PC-3 (cell line): ENCODE measurements at regions of chr11 and their contacts with region 1.

Region 1: DNA sequence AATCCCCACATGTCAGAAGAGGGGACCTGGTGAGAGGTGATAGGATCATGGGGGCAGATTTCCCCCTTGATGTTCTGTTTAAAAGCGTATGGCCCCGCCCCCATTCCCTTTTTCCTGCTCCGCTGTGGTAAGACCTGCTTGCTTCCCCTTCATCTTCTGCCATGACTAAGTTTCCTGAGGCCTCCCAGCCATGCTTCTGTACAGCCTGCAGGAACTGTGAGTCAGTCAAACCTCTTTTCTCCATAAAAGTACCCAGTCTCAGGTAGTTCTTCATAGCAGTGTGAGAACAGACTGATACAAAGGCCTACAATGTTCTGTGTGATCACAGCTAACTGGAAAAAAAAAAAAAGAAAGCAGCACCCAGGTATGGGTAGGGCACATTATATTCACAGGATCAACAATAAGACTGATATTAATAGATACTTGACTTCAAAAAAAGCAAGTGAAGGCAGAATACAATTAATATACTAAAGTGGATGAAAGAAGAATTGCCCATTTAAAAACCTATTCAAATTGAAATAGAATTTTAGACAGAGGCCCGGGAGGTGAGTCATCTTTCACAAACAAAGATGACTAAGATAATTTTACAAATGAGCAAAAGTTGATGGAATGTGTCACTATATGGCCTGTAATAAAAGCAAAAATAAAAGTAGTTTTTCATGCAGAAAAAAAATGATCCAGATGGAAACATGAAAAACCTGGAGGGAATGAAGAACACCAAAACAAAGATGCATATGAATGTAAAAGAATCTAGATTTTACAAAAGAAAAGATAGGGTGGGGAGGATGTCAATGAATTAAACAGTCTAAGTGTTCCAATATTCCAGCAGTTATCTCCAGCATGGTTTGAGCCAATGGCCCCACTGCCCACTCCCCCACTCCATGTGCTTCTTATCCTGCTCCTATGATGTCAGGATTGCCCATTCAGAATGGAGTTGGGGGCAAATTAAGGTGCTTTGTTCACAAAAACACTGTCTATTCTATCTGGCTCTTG is 1.6 kb upstream of the OR52K1 start:
- DNase-seq: peak; percentile 67
- ATAC-seq: peak; percentile 86
- H3K4me3 ChIP-seq: no peak overlapping the region
- H3K27ac ChIP-seq: peak overlapping the region; percentile 93
- H3K4me1 ChIP-seq: peaks cover 40% of the 10 kb centered on the region
- H3K27me3 ChIP-seq: no peaks in the 10 kb centered on the region
- CTCF ChIP-seq: no peak

Region 2: GRCh38 chr11:4393209-4393857 is 87.5 kb before region 1 on chr11 and contains the start of gene TRIM21:
- CTCF ChIA-PET with region 1: no interaction called
- POLR2A ChIA-PET with region 1: no interaction called
- intact Hi-C with region 1: loop called (anchors 5 kb)
- DNase-seq: peak; percentile 79
- ATAC-seq: peak; percentile 100
- H3K4me3 ChIP-seq: peak within 1 kb of the TSS; percentile 99
- H3K27ac ChIP-seq: no peak within 1 kb of the TSS
- H3K4me1 ChIP-seq: no peaks in the 10 kb centered on the region; the same call in 1 of the 2 replicates
- H3K27me3 ChIP-seq: no peaks in the 10 kb centered on the region
- CTCF ChIP-seq: no peak
- total RNA-seq, gene TRIM21: 6.9 and 7.6 TPM in 2 replicates

Region 3: DNA sequence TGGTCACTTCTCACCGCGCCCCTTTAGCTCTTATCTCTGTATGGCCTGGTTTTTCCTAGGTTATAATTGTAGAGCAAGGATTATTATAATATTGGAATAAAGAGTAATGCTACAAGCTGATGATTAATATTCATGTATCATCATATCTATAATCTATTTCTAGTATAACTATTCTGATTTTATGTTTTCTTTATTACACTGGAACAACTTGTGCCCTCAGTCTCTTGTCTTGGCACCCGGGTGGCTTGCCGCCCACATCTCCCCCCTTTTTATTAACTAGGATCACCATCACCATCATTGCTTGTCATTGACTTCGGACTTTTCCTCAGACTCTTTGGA is 12.6 kb after region 1 on chr11:
- CTCF ChIA-PET with region 1: no interaction called
- POLR2A ChIA-PET with region 1: no interaction called
- intact Hi-C with region 1: loop called (anchors 1 kb)
- DNase-seq: no peak
- ATAC-seq: no peak
- H3K4me3 ChIP-seq: no peak overlapping the region
- H3K27ac ChIP-seq: no peak overlapping the region
- H3K4me1 ChIP-seq: no peaks in the 10 kb centered on the region
- H3K27me3 ChIP-seq: peaks cover 47% of the 10 kb centered on the region
- CTCF ChIP-seq: no peak; the same call in none of the 2 replicates

Region 4: GRCh38 chr11:4682623-4683419 is 202.0 kb after region 1 on chr11:
- CTCF ChIA-PET with region 1: no interaction called
- POLR2A ChIA-PET with region 1: no interaction called
- intact Hi-C with region 1: no loop called
- DNase-seq: no peak
- ATAC-seq: no peak
- H3K4me3 ChIP-seq: no peak overlapping the region
- H3K27ac ChIP-seq: no peak overlapping the region
- H3K4me1 ChIP-seq: no peaks in the 10 kb centered on the region
- H3K27me3 ChIP-seq: no peaks in the 10 kb centered on the region
- CTCF ChIP-seq: no peak